ENCODE measurements at regions of chr12 and their contacts with region 1.

Region 1: DNA sequence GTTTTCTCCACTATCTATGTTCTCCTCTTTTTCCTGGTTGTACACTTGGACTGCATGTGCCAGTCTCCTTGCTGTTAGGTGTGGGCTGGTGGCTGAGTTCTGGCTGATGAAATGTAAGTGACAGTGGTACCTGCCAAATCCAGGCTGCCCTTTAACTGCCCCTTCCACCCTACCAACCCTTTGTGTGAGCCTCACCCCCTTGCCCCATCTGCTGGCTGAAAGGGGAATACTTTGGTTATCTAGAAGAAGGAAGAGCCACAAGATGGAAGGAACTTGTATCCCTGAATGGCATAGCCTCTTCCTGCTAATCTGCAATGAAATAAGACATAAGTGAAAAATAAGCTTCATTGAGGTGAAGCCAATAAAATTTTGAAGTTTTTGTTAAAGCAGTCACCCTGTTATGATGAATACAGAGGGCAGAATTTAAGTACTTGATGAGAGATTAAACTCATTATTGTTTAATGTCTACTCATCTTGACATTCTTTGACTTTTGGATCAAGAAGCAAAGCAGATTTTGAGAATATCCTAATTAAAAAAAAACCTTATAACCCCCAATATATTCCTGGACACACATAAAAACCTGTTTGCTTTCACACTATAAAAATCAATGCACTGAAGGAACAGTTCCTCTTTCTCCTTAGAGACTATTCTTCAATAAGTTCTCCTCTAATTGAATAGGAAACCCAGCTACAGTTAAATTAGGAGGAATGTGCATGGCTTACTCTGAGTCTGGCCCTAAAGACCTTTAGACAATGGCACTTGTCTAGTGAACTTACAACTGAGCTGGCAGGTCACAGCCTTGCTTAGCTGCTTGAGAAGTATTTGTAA is 262.6 kb upstream of the BTG1 start:
- DNase-seq: peak; percentile 77
- H3K4me3 Mint-ChIP-seq: no peak overlapping the region
- H3K27ac Mint-ChIP-seq: peak overlapping the region; percentile 33
- H3K4me1 Mint-ChIP-seq: peaks cover 48% of the 10 kb centered on the region
- H3K27me3 Mint-ChIP-seq: no peaks in the 10 kb centered on the region

Region 2: GRCh38 chr12:91382081-91382543 is 1026.2 kb before region 1 on chr12:
- CTCF ChIA-PET with region 1: interaction called, 13 read pairs
- POLR2A ChIA-PET with region 1: no interaction called
- intact Hi-C with region 1: loop called (anchors 5 kb)
- DNase-seq: peak; percentile 86
- H3K4me3 Mint-ChIP-seq: peak overlapping the region; percentile 60
- H3K27ac Mint-ChIP-seq: no peak overlapping the region
- H3K4me1 Mint-ChIP-seq: peaks cover 5% of the 10 kb centered on the region
- H3K27me3 Mint-ChIP-seq: peaks cover 4% of the 10 kb centered on the region

Region 3: GRCh38 chr12:92034858-92035401 is 373.4 kb before region 1 on chr12:
- CTCF ChIA-PET with region 1: no interaction called
- POLR2A ChIA-PET with region 1: no interaction called
- intact Hi-C with region 1: loop called (anchors 5 kb)
- DNase-seq: peak; percentile 66
- H3K4me3 Mint-ChIP-seq: peak overlapping the region; percentile 84
- H3K27ac Mint-ChIP-seq: peak overlapping the region; percentile 78
- H3K4me1 Mint-ChIP-seq: peaks cover 83% of the 10 kb centered on the region
- H3K27me3 Mint-ChIP-seq: no peaks in the 10 kb centered on the region

Region 4: DNA sequence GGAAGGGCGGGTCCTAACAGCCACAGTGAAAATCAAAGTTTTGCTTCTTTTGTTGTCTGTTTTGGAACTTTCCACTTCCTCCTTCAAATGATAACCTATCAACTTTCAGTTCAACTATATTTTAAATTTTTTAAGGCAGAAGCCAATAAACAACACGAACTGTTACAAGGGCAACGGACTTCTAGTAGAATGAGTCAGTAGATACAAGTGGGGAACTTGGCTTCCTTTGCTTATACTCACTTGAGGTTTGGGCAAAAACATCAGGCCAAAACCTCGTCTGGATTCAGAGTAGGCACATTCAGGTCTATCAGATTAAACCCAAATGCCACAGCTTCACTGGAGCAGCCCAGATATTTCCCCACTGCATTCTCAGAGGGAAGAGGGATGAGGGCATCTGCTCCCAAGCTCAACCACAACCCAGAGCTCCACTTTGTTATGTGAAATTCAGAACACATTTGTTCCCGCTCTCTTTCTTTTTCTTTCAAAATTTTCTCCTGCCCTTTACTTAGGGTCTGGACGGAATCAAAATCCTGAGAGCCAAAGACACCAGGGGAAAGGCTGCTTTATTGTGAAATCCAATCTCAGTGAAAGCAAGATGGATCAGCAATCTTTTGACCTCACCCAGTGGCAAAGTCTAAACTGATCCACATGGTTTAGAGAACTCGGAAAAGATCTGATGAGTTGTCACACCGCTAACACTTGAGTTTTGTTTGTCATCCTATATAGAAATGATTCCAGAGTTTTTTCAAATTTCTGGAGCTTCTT is 110.2 kb before region 1 on chr12:
- CTCF ChIA-PET with region 1: no interaction called
- POLR2A ChIA-PET with region 1: no interaction called
- intact Hi-C with region 1: loop called (anchors 2 kb)
- DNase-seq: peak; percentile 26
- H3K4me3 Mint-ChIP-seq: peak overlapping the region; percentile 30
- H3K27ac Mint-ChIP-seq: peak overlapping the region; percentile 79
- H3K4me1 Mint-ChIP-seq: peaks cover 13% of the 10 kb centered on the region
- H3K27me3 Mint-ChIP-seq: no peaks in the 10 kb centered on the region

Region 5: GRCh38 chr12:92469837-92470236 is 61.6 kb after region 1 on chr12:
- CTCF ChIA-PET with region 1: no interaction called
- POLR2A ChIA-PET with region 1: no interaction called
- intact Hi-C with region 1: loop called (anchors 1 kb)
- DNase-seq: no peak
- H3K4me3 Mint-ChIP-seq: no peak overlapping the region
- H3K27ac Mint-ChIP-seq: peak overlapping the region; percentile 83
- H3K4me1 Mint-ChIP-seq: peaks cover 38% of the 10 kb centered on the region
- H3K27me3 Mint-ChIP-seq: no peaks in the 10 kb centered on the region

Region 6: GRCh38 chr12:92570056-92570753 is 161.9 kb after region 1 on chr12:
- CTCF ChIA-PET with region 1: interaction called, 22 read pairs
- POLR2A ChIA-PET with region 1: no interaction called
- intact Hi-C with region 1: loop called (anchors 1 kb)
- DNase-seq: peak; percentile 25
- H3K4me3 Mint-ChIP-seq: no peak overlapping the region
- H3K27ac Mint-ChIP-seq: no peak overlapping the region
- H3K4me1 Mint-ChIP-seq: peaks cover 24% of the 10 kb centered on the region
- H3K27me3 Mint-ChIP-seq: no peaks in the 10 kb centered on the region